A549 (cell line): ENCODE measurements at regions of chr12 and their contacts with region 1.

Region 1: GRCh38 chr12:119432949-119433348 is 98.4 kb downstream of the CCDC60 start:
- DNase-seq: peak in 1 of 2 experiments; percentile 12
- ATAC-seq: 0 out of 6 replicates have a peak, but pooled peaks of 1 of the 2 experiments have one; percentile 30
- H3K4me3 ChIP-seq: no peak overlapping the region
- H3K27ac ChIP-seq: no peak overlapping the region
- H3K4me1 ChIP-seq: no peaks in the 10 kb centered on the region
- CTCF ChIP-seq: no peak
- EP300 ChIP-seq: no peak
- POLR2A ChIP-seq: no peak
- RAD21 ChIP-seq: no peak

Region 2: GRCh38 chr12:119444456-119445044 is 11.6 kb after region 1 on chr12:
- CTCF ChIA-PET with region 1: interaction called, 16 read pairs
- POLR2A ChIA-PET with region 1: no interaction called
- DNase-seq: peak; percentile 46 to 85
- ATAC-seq: peak; percentile 21 to 87; a peak in 4 of 6 replicates
- H3K4me3 ChIP-seq: no peak overlapping the region; the same call in 2 of the 3 replicates
- H3K27ac ChIP-seq: no peak overlapping the region
- H3K4me1 ChIP-seq: peaks cover 33% of the 10 kb centered on the region
- CTCF ChIP-seq: peak; percentile 73
- EP300 ChIP-seq: no peak
- POLR2A ChIP-seq: no peak
- RAD21 ChIP-seq: peak; percentile 45 to 64; a peak in 4 of 5 replicates